ENCODE measurements at regions of chr1 and their contacts with region 1.

Region 1: GRCh38 chr1:74314438-74314837 is 79.3 kb downstream of the TNNI3K start:
- DNase-seq: no peak
- ATAC-seq: no peak

Region 2: GRCh38 chr1:73366734-73367413 is 947.6 kb before region 1 on chr1:
- intact Hi-C with region 1: loop called in 1 of 2 experiments (anchors 10 kb)
- DNase-seq: no peak
- ATAC-seq: no peak

Region 3: GRCh38 chr1:74356493-74356892 is 42.1 kb after region 1 on chr1:
- intact Hi-C with region 1: no loop called
- DNase-seq: no peak
- ATAC-seq: no peak

Region 4: GRCh38 chr1:74368335-74368734 is 53.9 kb after region 1 on chr1:
- intact Hi-C with region 1: no loop called
- DNase-seq: no peak
- ATAC-seq: no peak

Region 5: DNA sequence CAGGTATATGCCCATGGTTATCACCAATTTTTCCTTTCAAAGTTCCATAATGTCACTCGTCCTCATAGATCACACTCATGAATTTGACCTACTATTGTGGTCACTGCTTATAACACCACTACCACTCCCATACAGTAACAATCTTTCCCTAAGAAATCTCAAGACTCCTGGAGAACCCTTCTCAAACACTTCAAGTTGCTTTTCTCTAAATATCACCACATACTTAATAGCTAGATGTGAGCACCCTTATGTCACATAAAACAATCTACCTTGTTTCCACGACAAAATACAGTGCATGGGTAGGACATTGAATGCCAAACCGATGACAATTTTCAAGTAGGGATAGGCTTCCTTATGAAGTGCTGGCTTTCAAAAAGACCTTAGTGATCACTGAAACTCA is 93.5 kb after region 1 on chr1:
- intact Hi-C with region 1: no loop called
- DNase-seq: no peak
- ATAC-seq: no peak